Adrenal gland (tissue), 19 donors: ENCODE measurements at regions of chr6 and their contacts with region 1.

Region 1: DNA sequence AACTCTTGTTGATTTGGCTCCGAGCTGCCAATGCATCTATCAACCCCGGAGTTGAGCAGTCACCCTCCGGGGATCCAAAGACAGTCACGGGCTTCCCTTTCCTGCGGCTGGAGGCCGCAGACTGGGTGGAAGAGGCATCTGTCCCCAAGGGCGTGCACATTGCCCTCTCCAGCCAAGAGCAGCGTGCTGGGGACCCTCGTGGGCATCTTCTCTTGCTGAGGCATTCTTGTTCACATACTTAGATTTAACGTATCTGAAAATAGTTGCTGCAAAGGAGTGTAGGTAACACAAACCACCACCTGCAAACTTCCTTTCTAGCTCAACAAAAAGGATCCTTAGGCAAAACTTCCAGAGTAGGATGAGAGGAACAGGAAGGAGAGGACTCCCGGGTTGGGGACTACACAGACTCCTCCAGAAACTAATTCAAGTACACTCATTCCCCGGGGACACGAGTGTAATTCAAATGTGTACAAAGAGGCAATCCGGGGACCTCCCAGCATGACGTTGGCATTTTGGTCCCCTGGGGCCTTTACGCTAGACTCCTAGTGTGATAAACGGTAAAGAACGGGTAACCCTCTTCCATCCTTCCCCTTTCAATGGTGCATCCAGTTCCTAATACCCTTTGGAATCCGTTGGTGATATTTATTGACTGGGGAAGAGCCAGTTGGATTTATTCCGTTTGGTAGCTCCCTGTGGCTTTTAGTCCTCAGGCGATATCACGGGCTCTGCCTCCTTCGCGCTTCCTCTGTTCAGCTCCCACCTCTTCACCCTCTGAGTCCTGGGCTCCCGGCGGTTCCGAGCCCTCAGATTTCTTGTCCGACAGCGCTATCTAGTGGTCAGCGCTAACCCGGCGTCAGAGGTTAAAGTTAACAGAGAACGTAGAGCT is 2.7 kb upstream of the COL12A1 start:
- DNase-seq: peak; percentile 75 to 92 (median 83)
- H3K4me3 ChIP-seq: peak overlapping the region in 1 of 4 donors; percentile 27
- H3K27ac ChIP-seq: peak overlapping the region in 2 of 5 donors; percentile 5 to 60
- H3K4me1 ChIP-seq: peaks cover 6 to 20% of the 10 kb centered on the region in 2 donors
- H3K27me3 ChIP-seq: peaks cover 34% of the 10 kb centered on the region
- CTCF ChIP-seq: peak; percentile 66 to 89 (median 84)
- POLR2A ChIP-seq: no peak

Region 2: GRCh38 chr6:73743556-73743955 is 1465.0 kb before region 1 on chr6:
- intact Hi-C with region 1: loop called in 1 of 2 experiments (anchors 5 kb)
- DNase-seq: no peak
- H3K4me3 ChIP-seq: no peak overlapping the region
- H3K27ac ChIP-seq: no peak overlapping the region
- H3K4me1 ChIP-seq: no peaks in the 10 kb centered on the region
- H3K27me3 ChIP-seq: no peaks in the 10 kb centered on the region
- CTCF ChIP-seq: no peak
- POLR2A ChIP-seq: no peak

Region 3: DNA sequence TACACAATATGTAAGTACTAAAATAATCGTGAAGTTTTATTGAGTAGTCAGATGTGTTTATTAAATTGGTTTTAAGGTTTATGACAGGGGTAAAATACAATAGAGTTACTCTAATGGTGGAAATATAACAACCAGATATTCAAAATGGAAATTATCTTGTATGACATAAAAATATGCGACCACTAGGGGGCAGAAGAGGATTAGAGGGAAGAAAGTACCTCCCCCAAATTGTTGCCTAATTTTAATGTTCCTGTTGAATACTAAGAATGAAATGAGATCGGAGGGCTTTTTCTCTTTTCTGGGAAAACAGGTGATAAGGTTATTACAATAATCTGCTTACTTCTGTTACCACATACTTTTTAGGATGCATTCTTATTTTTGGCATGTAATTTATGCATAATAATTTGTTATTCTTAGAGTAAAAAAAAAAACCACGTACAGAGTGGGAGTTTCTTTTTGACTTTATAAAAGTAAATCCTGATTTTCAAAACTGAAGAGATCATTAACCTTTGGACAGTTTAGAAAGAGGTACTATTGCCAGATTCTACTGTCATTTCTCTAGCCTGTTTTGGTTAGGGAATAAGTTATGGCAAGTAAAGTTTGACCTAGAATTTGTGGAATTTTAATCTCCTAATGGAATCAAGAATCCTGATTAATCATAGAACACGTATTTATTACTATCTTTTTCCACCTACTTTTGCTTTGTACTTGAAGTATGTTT is 1353.4 kb before region 1 on chr6:
- intact Hi-C with region 1: loop called in 1 of 2 experiments (anchors 5 kb)
- DNase-seq: peak in 4 of 7 donors; percentile 11 to 36 (median 24)
- H3K4me3 ChIP-seq: peak overlapping the region in 1 of 4 donors; percentile 6
- H3K27ac ChIP-seq: no peak overlapping the region
- H3K4me1 ChIP-seq: peaks cover 0 to 8% of the 10 kb centered on the region in 2 donors
- H3K27me3 ChIP-seq: no peaks in the 10 kb centered on the region
- CTCF ChIP-seq: peak; percentile 59 to 89 (median 74)
- POLR2A ChIP-seq: no peak

Region 4: DNA sequence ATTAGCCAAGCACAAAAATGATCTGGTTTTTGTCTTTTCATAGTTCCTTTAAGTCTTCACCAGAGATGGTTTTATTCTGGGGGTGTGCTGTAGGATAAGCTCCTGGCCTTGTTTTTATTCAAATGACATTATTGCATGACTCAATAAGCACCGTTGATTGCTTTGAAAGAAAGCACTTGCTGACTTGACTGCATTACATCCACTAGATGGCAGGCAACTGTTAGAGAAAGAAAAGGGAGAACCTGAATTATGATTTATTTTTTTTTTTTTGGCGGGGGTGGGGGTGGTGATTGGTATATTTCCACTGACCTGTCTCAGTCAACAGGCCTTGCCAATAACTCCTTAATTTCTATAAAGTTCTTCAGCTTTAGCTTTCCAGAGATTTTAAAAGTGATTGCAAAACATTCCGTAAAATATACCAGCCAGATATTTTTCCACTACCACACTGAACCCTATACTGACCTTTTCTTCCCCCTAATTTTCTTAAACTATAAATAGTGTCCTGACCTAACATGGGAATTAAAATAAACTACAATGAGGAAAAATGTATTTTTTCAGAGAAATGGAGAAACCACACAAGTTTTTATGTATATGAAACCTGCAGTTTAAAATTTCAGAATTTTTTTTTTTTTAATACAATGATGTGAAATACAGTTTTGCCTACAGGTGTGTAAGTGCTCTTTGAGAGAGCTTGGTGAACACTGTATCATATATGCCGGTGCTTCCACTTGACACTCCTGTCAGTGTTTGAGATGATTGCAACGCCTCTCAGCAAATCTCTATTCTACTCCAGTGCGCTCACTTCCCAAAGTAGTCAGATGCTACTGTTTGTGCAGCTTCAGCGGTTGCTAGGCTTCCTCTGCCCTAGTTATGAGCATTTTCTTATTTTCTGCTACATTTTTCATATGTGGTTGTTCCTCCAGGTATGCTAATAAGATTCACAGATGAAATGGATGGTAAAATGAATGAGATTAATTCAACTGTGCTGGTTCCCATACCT is 1238.3 kb before region 1 on chr6:
- intact Hi-C with region 1: loop called in 1 of 2 experiments (anchors 10 kb)
- DNase-seq: peak in 1 of 7 donors; percentile 12
- H3K4me3 ChIP-seq: no peak overlapping the region
- H3K27ac ChIP-seq: no peak overlapping the region
- H3K4me1 ChIP-seq: no peaks in the 10 kb centered on the region
- H3K27me3 ChIP-seq: no peaks in the 10 kb centered on the region
- CTCF ChIP-seq: peak; percentile 19 to 68 (median 48)
- POLR2A ChIP-seq: no peak

Region 5: GRCh38 chr6:74091136-74091793 is 1117.3 kb before region 1 on chr6:
- intact Hi-C with region 1: loop called in 1 of 2 experiments (anchors 10 kb)
- DNase-seq: peak in 1 of 7 donors; percentile 2
- H3K4me3 ChIP-seq: no peak overlapping the region
- H3K27ac ChIP-seq: no peak overlapping the region
- H3K4me1 ChIP-seq: no peaks in the 10 kb centered on the region
- H3K27me3 ChIP-seq: no peaks in the 10 kb centered on the region
- CTCF ChIP-seq: peak; percentile 38 to 77 (median 58)
- POLR2A ChIP-seq: no peak

Region 6: GRCh38 chr6:74749211-74750142 is 459.1 kb before region 1 on chr6:
- intact Hi-C with region 1: loop called in 1 of 2 experiments (anchors 10 kb)
- DNase-seq: no peak
- H3K4me3 ChIP-seq: no peak overlapping the region
- H3K27ac ChIP-seq: no peak overlapping the region
- H3K4me1 ChIP-seq: no peaks in the 10 kb centered on the region
- H3K27me3 ChIP-seq: no peaks in the 10 kb centered on the region
- CTCF ChIP-seq: no peak
- POLR2A ChIP-seq: no peak

Region 7: GRCh38 chr6:74912234-74912633 is 296.3 kb before region 1 on chr6:
- intact Hi-C with region 1: no loop called
- DNase-seq: no peak
- H3K4me3 ChIP-seq: no peak overlapping the region
- H3K27ac ChIP-seq: no peak overlapping the region
- H3K4me1 ChIP-seq: no peaks in the 10 kb centered on the region
- H3K27me3 ChIP-seq: no peaks in the 10 kb centered on the region
- CTCF ChIP-seq: no peak
- POLR2A ChIP-seq: no peak